AG04450 (cell line): ENCODE measurements at regions of chr15 and their contacts with region 1.

Region 1: DNA sequence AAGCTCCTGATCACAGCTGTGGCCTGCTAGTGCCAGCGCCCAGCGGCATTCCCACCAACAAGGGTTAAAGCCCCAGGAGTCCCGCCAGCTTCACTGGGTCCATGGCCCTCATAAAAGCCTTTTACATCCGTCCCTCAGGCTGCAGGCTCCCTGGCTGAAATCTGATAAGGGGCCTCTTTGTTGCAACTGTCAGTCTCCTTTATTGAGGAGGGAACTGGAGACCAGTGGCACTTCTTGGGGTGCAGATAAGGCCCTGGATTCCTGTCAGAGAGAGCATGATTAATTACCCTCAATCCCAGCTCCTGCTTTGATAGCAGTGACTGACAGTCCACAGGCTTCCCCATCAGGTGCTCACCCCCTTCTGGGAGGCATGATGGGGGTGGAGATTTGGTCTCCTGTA is 30.9 kb upstream of the CLK3 start:
- DNase-seq: no peak
- H3K4me3 ChIP-seq: no peak overlapping the region
- H3K27ac ChIP-seq: no peak overlapping the region
- H3K27me3 ChIP-seq: no peaks in the 10 kb centered on the region
- CTCF ChIP-seq: no peak

Region 2: DNA sequence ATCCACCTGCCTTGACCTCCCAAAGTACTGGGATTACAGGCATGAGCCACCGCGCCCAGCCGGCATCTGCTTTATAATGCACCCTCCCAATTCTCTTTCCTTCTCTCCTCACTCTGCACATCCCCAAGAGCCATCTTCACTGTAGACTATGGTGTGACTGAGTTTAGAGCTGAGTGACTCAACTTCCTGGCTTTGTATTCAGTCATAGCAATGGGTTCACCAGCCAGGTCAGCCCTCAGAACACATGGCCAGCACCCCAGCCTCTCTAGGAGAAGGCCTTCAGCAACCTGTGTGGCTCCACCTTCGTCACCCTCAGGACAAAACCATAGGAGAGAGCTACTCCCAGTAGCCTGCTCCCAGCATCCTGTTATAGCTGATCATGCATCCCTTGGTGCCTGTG is 10.8 kb before region 1 on chr15:
- CTCF ChIA-PET with region 1: interaction called, 11 read pairs
- POLR2A ChIA-PET with region 1: no interaction called
- DNase-seq: no peak
- H3K4me3 ChIP-seq: no peak overlapping the region
- H3K27ac ChIP-seq: no peak overlapping the region
- H3K27me3 ChIP-seq: no peaks in the 10 kb centered on the region
- CTCF ChIP-seq: no peak